Activated B cell treated with CpG ODN at 0.5 μM for 24 hours (primary cell): ENCODE measurements at regions of chr9 and their contacts with region 1.

Region 1: GRCh38 chr9:124218438-124218982 is 39.2 kb upstream of the NEK6 start:
- DNase-seq: peak; percentile 78
- ATAC-seq: peak; percentile 64
- H3K4me3 Mint-ChIP-seq: peak overlapping the region; percentile 69
- H3K27ac Mint-ChIP-seq: peak overlapping the region; percentile 96
- H3K4me1 Mint-ChIP-seq: peaks cover 87% of the 10 kb centered on the region
- H3K27me3 Mint-ChIP-seq: no peaks in the 10 kb centered on the region
- CTCF ChIP-seq: no peak

Region 2: GRCh38 chr9:124197177-124198095 is 21.1 kb before region 1 on chr9:
- CTCF ChIA-PET with region 1: interaction called, 29 read pairs
- POLR2A ChIA-PET with region 1: interaction called, 256 read pairs
- intact Hi-C with region 1: loop called (anchors 1 kb)
- DNase-seq: peak; percentile 47
- ATAC-seq: peak; percentile 86
- H3K4me3 Mint-ChIP-seq: peak overlapping the region; percentile 72
- H3K27ac Mint-ChIP-seq: peak overlapping the region; percentile 96
- H3K4me1 Mint-ChIP-seq: peaks cover 65% of the 10 kb centered on the region
- H3K27me3 Mint-ChIP-seq: no peaks in the 10 kb centered on the region
- CTCF ChIP-seq: no peak

Region 3: GRCh38 chr9:124239249-124240073 is 21.0 kb after region 1 on chr9:
- CTCF ChIA-PET with region 1: no interaction called
- POLR2A ChIA-PET with region 1: interaction called, 34 read pairs
- intact Hi-C with region 1: loop called (anchors 1 kb)
- DNase-seq: no peak
- ATAC-seq: peak; percentile 97
- H3K4me3 Mint-ChIP-seq: peak overlapping the region; percentile 48
- H3K27ac Mint-ChIP-seq: peak overlapping the region; percentile 86
- H3K4me1 Mint-ChIP-seq: peaks cover 53% of the 10 kb centered on the region
- H3K27me3 Mint-ChIP-seq: no peaks in the 10 kb centered on the region
- CTCF ChIP-seq: no peak

Region 4: GRCh38 chr9:124267271-124267807 is 48.8 kb after region 1 on chr9:
- CTCF ChIA-PET with region 1: interaction called, 3 read pairs
- POLR2A ChIA-PET with region 1: interaction called, 81 read pairs
- intact Hi-C with region 1: loop called (anchors 1 kb)
- DNase-seq: peak; percentile 43
- ATAC-seq: peak; percentile 49
- H3K4me3 Mint-ChIP-seq: peak overlapping the region; percentile 66
- H3K27ac Mint-ChIP-seq: peak overlapping the region; percentile 88
- H3K4me1 Mint-ChIP-seq: peaks cover 95% of the 10 kb centered on the region
- H3K27me3 Mint-ChIP-seq: no peaks in the 10 kb centered on the region
- CTCF ChIP-seq: no peak

Region 5: DNA sequence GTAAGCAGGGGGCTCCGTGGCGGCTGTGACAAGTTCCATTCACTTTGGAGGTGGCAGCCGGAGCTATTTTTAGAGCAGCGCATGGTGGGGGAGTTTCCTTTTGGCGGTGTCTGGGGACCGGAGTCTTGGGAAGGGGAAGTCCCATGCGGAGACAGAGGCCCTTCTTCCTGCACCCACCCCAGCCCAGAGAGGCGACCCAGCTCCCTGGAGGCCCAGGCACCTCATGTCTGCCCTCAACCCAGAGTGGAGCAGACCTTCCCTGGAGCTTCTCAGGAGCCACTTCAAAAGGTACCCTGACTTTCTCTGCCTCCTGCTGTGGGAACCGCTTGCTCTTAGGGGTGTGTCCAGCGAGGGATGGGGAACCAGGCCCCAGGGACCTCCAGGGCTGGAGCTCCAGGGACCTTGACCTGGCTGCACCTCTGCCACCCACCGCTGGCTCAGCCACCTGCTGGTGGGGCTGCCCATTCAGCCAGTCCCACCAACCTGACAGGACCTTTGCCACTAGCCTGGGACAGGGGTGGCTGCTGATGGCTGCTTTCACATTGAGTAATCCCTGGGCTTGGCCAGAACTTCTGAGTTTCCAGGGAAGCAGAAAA is 73.4 kb after region 1 on chr9:
- CTCF ChIA-PET with region 1: interaction called, 4 read pairs
- POLR2A ChIA-PET with region 1: interaction called, 25 read pairs
- intact Hi-C with region 1: loop called (anchors 1 kb)
- DNase-seq: peak; percentile 62
- ATAC-seq: peak; percentile 59
- H3K4me3 Mint-ChIP-seq: peak overlapping the region; percentile 68
- H3K27ac Mint-ChIP-seq: peak overlapping the region; percentile 85
- H3K4me1 Mint-ChIP-seq: peaks cover 96% of the 10 kb centered on the region
- H3K27me3 Mint-ChIP-seq: no peaks in the 10 kb centered on the region
- CTCF ChIP-seq: no peak

Region 6: DNA sequence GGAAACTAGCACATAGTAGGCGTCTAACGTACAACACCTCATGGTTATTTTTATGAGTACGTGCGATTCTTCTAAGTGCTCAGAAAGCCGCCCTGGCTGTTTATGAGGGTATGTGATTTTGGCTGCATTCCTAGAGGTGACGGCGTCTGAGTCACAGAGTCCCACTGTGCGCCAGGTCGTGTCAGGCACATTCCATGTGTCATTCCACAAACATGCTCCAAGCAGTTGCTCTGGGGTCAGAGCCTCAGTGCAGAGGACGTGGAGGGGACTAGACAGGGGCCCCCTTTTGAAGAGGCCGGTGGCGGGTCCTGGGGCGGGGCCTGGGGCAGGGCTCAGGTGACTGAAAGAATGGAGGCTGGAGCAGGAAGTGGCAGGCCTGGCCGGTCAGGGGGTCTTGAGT is 91.2 kb after region 1 on chr9:
- CTCF ChIA-PET with region 1: no interaction called
- POLR2A ChIA-PET with region 1: no interaction called
- intact Hi-C with region 1: no loop called
- DNase-seq: no peak
- ATAC-seq: no peak
- H3K4me3 Mint-ChIP-seq: no peak overlapping the region
- H3K27ac Mint-ChIP-seq: no peak overlapping the region
- H3K4me1 Mint-ChIP-seq: peaks cover 8% of the 10 kb centered on the region
- H3K27me3 Mint-ChIP-seq: no peaks in the 10 kb centered on the region
- CTCF ChIP-seq: no peak

Region 7: DNA sequence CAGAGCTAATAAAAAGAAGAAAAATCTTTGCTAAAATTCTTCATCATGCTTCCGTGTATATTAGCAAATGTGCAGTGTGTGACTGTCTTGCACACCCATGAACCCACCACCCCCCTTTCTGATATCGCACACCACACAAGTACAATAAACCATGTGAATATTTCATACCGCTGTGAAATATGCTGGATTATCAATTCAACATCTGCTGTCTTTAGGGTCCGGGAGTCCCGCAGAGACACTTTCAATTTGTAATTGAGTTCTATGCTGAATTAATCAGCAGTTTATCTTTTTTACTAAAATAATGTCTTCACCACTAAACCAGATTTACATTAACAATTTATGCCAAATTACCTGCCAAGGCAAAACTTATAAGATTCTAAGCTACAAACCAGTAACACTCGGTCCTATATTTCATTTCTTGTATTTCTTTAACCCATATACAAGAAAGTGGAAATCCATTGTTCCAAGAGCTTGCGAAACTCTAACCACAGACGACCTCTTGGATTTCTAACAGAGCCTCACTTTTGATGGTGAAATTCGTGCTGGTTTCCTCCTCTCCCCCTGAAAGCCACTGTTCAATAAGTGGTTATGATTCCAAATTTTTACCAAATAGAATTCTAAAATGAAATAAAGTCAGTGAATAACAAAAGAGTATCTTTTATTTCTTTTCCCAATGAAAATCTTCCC is 152.5 kb after region 1 on chr9:
- CTCF ChIA-PET with region 1: no interaction called
- POLR2A ChIA-PET with region 1: no interaction called
- intact Hi-C with region 1: no loop called
- DNase-seq: no peak
- ATAC-seq: no peak
- H3K4me3 Mint-ChIP-seq: no peak overlapping the region
- H3K27ac Mint-ChIP-seq: no peak overlapping the region
- H3K4me1 Mint-ChIP-seq: peaks cover 1% of the 10 kb centered on the region
- H3K27me3 Mint-ChIP-seq: no peaks in the 10 kb centered on the region
- CTCF ChIP-seq: no peak